Activated naive CD4-positive, alpha-beta T cell treated with anti-CD3 and anti-CD28 coated beads, Interleukin-2, amount 10 ng/mL, durations not matched to agents 7 days and 5 days (primary cell): ENCODE measurements at regions of chr19 and their contacts with region 1.

Region 1: DNA sequence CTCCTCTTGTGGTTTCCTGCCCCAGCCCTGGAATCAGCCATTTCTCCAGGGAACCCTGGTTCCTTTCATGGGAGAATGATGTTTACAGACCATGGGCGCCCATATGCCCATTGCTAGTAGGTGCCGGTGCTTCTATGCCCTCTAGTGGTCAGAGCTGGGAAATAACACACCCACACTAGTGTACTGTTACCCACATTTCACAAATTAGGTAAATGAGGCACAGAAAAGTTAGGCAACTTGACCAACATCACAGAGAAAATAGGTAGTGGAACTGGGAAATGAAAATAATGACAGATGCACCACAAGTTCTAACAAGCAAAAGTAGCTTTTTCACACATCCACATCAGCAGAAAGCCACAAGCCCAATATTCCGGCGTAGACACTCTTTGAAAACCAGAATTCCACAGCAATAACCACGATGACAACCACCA is 1.3 kb upstream of the CEACAM3 start:
- DNase-seq: peak; percentile 75
- H3K4me3 Mint-ChIP-seq: no peak overlapping the region
- H3K27ac Mint-ChIP-seq: no peak overlapping the region
- H3K4me1 Mint-ChIP-seq: no peaks in the 10 kb centered on the region
- H3K27me3 Mint-ChIP-seq: peaks cover 58% of the 10 kb centered on the region

Region 2: DNA sequence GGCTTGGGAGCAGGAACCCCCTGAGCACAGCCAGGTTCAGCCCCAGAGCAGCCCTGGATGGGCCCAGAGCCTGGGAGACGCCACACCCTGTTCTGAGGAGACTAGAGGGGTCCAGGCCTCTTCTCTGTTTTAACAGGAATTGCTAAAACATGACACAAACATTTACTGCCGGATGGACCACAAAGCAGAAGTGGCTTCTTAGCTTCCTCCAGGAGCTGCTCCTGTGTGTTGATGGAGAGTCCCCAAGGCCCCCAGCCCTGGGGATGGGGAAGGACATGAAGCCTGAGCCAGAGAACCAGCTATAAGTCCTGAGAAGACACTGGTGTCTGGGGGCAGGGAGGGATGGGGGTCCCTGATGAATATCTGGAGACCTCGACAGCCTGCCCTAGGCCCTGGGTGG is 16.0 kb after region 1 on chr19:
- CTCF ChIA-PET with region 1: interaction called, 158 read pairs
- DNase-seq: no peak
- H3K4me3 Mint-ChIP-seq: no peak overlapping the region
- H3K27ac Mint-ChIP-seq: no peak overlapping the region
- H3K4me1 Mint-ChIP-seq: peaks cover 9% of the 10 kb centered on the region
- H3K27me3 Mint-ChIP-seq: peaks cover 26% of the 10 kb centered on the region

Region 3: GRCh38 chr19:41821003-41821735 is 26.1 kb after region 1 on chr19:
- CTCF ChIA-PET with region 1: interaction called, 158 read pairs
- DNase-seq: peak; percentile 64
- H3K4me3 Mint-ChIP-seq: no peak overlapping the region
- H3K27ac Mint-ChIP-seq: no peak overlapping the region
- H3K4me1 Mint-ChIP-seq: no peaks in the 10 kb centered on the region
- H3K27me3 Mint-ChIP-seq: peaks cover 24% of the 10 kb centered on the region

Region 4: GRCh38 chr19:41837981-41838708 is 43.1 kb after region 1 on chr19:
- CTCF ChIA-PET with region 1: interaction called, 16 read pairs
- DNase-seq: no peak
- H3K4me3 Mint-ChIP-seq: no peak overlapping the region
- H3K27ac Mint-ChIP-seq: no peak overlapping the region
- H3K4me1 Mint-ChIP-seq: no peaks in the 10 kb centered on the region
- H3K27me3 Mint-ChIP-seq: peaks cover 39% of the 10 kb centered on the region

Region 5: DNA sequence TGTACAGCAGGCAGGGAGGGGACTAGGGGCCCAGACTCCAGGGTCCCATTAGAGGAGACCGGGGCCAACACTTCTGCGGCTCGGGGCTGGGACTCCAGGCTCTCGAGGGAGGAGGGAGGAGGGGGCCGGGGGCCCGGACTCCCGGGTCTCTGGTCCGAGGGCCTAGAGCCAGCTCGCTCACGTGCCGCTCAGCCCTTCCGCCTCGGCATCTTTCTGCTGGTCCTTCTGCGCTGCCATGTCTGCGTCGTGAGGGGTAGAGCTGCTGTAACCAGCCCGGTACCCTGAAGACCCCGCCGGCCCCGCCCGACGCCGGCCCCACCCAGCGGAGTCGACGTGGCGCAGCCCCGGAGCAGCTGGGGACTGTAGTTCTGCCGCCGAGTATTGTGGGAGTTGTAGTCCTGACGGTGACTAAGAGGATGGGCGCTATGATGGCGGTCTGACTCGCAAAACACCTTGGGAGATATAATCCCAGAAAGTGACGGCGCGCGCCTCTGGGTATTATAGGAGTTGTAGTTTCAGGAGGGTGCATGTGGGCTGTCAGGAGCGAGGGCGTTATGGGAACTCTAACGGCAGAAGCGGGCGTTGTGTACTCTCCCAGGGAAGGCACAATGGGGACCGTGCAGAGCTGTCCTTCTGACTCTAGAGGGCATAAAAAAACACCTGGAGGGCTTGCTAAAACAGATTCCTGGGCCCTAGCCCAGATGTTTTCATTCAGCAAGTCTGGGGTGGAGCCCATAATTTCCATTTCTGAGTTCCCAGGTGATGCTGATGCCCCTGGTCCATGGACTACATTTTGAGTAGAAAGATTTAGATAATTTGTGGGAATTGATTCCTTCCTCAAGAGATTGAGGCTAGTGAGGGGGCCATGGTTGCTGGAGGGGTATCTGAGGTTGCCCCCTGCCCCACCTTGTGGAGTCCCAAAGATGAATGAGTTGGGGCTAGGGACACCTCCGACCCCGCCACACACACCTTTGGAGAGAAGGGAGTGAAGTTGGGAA is 164.3 kb after region 1 on chr19 and contains the start of gene RABAC1:
- CTCF ChIA-PET with region 1: interaction called, 16 read pairs
- DNase-seq: peak; percentile 95
- H3K4me3 Mint-ChIP-seq: peak within 1 kb of the TSS; percentile 86
- H3K27ac Mint-ChIP-seq: peak within 1 kb of the TSS; percentile 85
- H3K4me1 Mint-ChIP-seq: peaks cover 27% of the 10 kb centered on the region
- H3K27me3 Mint-ChIP-seq: no peaks in the 10 kb centered on the region